Left colon (tissue), 2 donors: ENCODE measurements at regions of chr6 and their contacts with region 1.

Region 1: GRCh38 chr6:56292505-56293181 is 45.3 kb upstream of the COL21A1 start:
- DNase-seq: peak in 1 of 2 donors; percentile 9
- ATAC-seq: peak; percentile 78

Region 2: DNA sequence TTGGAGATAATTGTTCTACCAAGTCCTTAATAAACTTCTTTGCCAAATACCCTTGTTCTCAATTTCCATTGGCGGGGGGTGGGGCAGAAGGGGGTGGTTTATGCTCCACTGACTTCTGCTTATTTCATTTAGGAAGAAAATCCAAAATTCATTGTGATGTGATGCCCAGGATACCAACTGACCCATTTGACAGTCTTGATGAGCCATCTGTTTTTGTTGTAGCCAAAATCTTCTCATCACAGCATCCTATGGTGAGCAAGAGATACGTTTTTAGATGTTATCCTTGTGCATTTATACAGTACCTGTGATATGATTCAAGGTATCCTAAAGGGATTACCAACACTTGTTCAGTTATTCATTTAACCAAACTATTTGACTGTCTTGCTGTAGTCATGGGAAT is 308.8 kb before region 1 on chr6:
- intact Hi-C with region 1: loop called in 1 of 2 experiments (anchors 2 kb)
- DNase-seq: no peak
- ATAC-seq: no peak